Dorsolateral prefrontal cortex (tissue), 120 donors: ENCODE measurements at regions of chr16 and their contacts with region 1.

Region 1: DNA sequence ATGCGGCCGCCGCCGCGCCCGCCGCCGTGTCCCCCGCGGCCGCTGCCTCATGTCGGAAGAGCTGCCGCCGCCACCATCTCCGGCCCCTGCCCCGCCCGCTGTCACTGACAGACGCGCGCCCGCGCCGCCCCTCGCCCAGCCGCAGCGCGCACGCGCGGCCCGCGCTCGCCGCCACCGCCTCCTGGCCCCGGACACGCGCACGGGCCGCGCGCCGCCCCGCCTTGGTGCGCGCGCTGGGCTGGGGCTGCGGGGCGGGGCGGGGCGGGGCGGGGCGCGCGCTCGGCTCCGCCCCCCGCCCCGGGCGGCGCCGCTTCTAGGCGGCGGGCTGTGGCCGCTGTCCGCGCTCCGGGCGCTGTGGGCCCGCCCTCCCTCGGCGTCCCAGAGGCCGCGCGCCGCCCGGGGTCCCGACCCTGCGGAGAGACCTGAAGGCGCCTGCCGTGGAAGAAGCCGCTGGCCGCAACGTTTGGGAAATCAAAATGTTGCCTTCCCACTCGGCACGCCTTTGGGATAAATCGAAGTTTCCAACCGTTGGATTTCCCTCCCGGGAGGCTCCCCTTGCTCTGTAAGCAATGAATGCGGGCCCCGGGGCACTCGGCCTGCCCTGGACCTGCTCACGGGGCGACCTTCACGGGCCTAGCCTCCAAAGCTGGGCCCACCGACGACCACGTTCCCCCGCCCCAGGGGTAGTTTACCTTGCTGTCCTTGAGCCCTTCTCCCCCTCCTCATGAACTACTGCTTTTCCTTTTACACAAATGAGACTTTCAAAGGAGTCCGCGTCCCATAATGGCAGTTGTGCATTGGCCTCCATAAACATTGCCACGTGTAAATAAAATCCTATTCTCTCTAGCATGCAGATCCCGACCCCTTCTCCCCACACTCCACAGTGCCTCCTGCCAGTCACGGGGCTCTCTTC is at the start of gene ADCY9:
- DNase-seq: peak in 9 of 10 donors; percentile 36 to 82 (median 62)
- H3K4me3 ChIP-seq: peak within 1 kb of the TSS; percentile 59 to 86 (median 73)
- H3K27ac ChIP-seq: peak within 1 kb of the TSS in 48 of 59 donors; percentile 9 to 86 (median 72)
- H3K27me3 ChIP-seq: no peaks in the 10 kb centered on the region
- CTCF ChIP-seq: no peak
- total RNA-seq, gene ADCY9: 16.3 to 55.2 (median 33.9) TPM

Region 2: DNA sequence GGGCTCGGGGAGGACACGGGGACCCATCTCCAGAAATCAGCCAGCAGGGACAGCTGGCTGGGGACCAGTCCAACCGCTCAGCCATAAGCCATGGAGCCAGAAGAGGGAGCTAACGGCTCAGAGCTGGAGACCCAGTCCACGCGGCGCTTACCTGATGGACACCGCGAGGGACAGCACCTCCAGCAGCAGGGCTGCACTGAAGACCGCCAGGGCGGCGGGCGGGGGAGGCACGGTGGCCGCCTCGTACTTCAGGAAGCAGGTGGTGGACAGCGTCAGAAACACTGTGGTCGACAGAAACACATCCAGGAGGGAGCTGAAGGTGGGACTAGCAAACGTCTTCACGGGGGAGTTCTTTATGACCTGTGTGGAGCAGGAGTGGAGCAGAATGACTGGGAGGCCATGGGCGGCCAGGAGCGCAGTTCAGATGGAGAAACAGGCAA is 133.5 kb before region 1 on chr16:
- intact Hi-C with region 1: loop called in 1 of 2 experiments (anchors 5 kb)
- DNase-seq: peak; percentile 39 to 85 (median 70)
- H3K4me3 ChIP-seq: no peak overlapping the region
- H3K27ac ChIP-seq: no peak overlapping the region
- H3K27me3 ChIP-seq: no peaks in the 10 kb centered on the region
- CTCF ChIP-seq: peak in 54 of 56 donors; percentile 15 to 81 (median 65)

Region 3: DNA sequence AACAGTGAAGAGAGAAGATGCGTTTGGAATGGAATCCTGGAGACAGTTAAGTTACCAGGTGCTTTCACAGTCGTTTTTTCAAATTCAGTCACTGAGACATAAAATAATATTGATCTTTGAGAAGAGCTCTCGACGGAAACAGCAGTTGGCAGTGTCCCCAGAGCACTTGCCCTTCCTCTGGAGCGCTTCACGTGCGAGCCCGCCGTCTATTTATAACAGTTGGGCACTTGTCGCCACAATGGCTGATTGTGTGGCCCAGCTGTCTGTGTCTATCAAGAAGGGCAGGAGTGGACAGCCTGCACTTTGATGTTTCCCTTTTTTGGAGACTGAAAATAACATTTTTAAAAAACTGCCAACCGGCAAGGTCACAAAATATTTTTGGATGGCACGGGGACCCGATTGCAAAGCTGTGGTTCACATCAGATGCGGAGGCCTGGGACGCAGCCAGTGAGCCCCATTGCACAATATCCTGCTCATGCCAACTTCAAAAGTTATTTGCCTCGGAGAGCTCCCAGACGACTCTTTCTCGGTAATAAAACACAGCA is 63.2 kb before region 1 on chr16:
- intact Hi-C with region 1: loop called in 1 of 2 experiments (anchors 10 kb)
- DNase-seq: peak; percentile 25 to 86 (median 71)
- H3K4me3 ChIP-seq: peak overlapping the region in 55 of 59 donors; percentile 3 to 52 (median 32)
- H3K27ac ChIP-seq: peak overlapping the region in 43 of 59 donors; percentile 1 to 74 (median 47)
- H3K27me3 ChIP-seq: peaks cover 0 to 4% (median 0%) of the 10 kb centered on the region in 45 donors
- CTCF ChIP-seq: peak in 2 of 56 donors; percentile 17 to 26

Region 4: DNA sequence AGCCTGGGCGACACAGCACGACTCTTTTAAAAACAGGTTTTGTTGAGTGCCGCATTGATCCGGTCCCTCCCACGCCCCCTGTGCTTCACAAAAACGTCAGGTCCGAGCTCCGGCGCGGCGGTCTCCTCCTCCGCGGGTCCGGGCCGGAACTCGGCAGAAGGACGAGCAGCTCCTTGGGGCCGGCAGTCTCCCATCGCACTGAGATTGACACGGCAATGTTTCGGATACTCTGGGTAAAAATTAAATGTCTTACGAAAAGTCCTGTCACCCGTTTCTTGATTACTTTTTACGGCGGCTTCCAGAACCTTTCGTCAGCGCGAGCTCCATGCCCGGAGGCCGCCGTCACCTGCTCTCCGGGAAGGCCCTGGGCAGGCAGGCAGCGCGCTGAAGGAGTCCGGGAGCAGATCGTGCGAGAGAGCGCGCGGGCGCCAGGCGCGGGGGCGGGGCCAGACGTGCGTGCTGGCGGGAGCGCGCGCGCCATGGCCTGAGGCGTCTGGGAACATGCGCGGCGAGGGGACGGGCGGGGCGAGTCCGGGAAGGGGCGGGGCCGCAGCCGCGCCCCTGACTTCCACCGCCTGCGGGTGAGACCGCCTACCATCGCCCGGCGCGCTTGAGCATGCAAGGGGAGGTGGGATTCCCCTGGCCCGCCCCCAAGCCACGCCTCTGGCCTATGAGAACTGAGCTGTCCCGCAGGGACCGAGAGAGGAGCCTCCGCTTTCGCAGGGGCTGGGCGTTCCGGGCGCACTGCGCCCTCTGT is 137.0 kb after region 1 on chr16:
- intact Hi-C with region 1: loop called (anchors 1 kb)
- DNase-seq: peak; percentile 92 to 99 (median 98)
- H3K4me3 ChIP-seq: peak overlapping the region; percentile 55 to 91 (median 78)
- H3K27ac ChIP-seq: peak overlapping the region; percentile 60 to 98 (median 93)
- H3K27me3 ChIP-seq: no peaks in the 10 kb centered on the region
- CTCF ChIP-seq: peak in 6 of 56 donors; percentile 99 to 100 (median 100)